Left cardiac atrium (tissue), 4 donors: ENCODE measurements at regions of chr17 and their contacts with region 1.

Region 1: GRCh38 chr17:62703775-62704378 is 76.4 kb downstream of the MRC2 start:
- DNase-seq: peak; percentile 82
- ATAC-seq: peak; percentile 92 to 93

Region 2: DNA sequence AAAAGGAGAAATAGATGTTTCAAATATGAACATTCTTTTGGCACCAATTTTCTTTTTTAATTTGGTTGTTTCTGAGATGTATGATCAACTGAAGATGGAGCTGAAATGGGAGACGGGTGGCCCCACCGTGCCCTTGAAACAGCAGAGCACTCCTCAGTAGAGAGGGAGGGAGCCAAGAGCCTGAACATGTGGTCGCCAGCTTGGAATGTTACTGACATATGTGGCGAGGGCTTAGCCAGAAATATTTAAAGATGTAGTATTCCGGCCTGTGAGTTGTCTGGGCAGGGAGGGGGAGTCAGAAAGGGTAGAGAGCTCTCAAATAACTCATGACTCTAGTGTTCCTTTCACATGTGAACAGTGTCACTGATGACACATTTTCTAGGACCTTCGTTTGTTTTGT is 89.7 kb before region 1 on chr17:
- intact Hi-C with region 1: no loop called
- DNase-seq: no peak
- ATAC-seq: peak in 1 of 2 donors; percentile 43

Region 3: GRCh38 chr17:62739645-62740388 is 35.9 kb after region 1 on chr17:
- intact Hi-C with region 1: no loop called
- DNase-seq: no peak
- ATAC-seq: peak in 1 of 2 donors; percentile 63

Region 4: DNA sequence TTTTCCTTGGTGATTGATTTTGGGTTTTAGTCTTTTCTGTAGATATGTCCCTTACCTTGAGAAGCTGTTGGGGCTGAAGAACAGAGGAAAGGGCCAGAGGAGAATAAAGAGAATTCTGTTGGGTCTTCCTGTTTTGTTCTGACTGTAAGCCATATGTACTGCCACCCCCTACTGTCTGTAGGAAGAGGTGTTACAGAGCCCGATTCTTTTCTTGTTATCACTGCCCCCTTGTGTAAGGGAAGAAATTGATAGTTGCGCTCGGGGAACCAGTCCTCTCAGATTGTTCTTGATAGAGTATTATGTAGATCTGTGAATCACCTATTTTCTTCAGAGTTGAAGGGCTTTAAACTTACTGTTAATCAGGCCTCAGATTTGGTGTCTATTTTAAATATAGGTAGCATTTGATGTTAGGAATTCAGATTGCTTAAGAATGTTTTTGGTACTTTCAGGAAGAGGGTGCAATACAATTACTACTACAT is 264.6 kb after region 1 on chr17:
- intact Hi-C with region 1: loop called (anchors 2 kb)
- DNase-seq: no peak
- ATAC-seq: peak; percentile 33 to 46

Region 5: GRCh38 chr17:62981928-62982327 is 278.1 kb after region 1 on chr17:
- intact Hi-C with region 1: no loop called
- DNase-seq: no peak
- ATAC-seq: no peak